Left lung (tissue), 14 donors: ENCODE measurements at regions of chr3 and their contacts with region 1.

Region 1: DNA sequence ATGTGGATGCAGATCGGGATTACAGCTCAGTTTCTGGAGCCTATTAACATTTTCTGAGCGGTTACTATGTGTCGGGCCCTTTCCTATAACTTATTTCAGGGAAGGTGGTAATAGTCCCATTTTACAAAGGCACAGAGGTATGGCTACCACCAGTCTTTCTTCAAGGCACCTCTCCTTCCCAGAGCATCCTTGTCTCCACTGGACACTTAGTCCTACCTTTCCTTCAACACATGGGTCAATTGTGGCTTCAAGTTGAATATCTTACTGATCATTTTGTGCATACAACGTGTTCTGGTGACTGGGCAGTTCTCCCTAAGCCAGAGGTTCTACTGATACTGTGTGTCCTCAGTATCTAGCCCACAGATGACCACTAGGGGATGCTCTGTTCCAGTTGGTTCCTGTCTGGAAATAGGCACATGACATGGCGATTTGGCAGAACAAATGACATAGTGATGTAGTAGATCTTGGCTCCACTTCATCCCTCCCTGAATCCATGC is 60.7 kb upstream of the CMTM8 start:
- DNase-seq: peak in 1 of 4 donors; percentile 53
- ATAC-seq: peak; percentile 97
- H3K4me3 ChIP-seq: no peak overlapping the region
- H3K27ac ChIP-seq: no peak overlapping the region
- H3K4me1 ChIP-seq: peaks cover 9 to 13% of the 10 kb centered on the region in 2 donors
- H3K27me3 ChIP-seq: no peaks in the 10 kb centered on the region
- CTCF ChIP-seq: peak; percentile 71 to 72

Region 2: DNA sequence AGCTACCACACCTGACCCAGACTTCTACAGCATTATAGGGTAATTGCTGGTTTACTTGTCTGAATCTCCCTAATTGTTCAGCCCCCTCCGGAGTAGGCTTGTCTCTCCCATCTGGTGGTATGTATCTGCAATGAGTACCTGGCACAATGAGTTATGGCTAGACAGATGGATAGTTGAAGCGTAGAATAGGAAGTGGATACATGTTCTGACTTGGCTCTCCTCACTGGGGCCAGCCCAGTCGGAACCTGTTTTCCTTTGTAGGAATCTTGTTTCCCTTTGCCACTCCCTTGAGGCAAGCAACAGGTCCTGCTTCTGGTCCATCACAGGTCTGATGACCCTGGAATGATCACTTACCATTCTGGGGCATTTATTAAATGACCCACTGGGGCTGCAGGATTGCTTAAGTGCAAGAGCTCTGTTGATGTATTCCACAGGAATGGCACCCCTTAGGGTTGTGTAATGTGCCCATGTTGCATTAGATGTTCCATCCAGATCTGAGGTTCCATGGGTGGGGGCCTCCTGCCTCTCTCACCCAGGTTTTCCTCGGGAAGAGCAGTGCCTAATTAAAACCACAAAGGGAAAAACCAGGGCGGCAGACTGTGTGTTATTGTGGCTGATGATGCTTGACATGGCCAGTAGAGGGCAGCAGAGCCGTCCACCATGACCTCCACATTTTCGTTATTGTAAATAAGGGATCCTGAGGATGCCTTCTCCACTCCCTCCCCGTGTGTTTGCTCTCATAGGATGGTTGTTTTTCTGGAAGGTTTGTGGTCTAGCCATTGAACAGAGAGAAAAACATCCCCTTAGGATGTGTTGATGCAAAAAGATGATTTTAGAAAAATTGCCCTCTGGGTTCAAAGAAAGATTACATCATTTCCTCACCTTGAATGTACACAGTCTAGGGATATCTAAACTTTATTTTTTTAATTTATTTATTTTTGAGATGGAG is 118.8 kb after region 1 on chr3:
- intact Hi-C with region 1: loop called in 1 of 2 experiments (anchors 10 kb)
- DNase-seq: peak in 3 of 4 donors; percentile 49 to 75 (median 58)
- ATAC-seq: peak; percentile 91
- H3K4me3 ChIP-seq: no peak overlapping the region
- H3K27ac ChIP-seq: no peak overlapping the region
- H3K4me1 ChIP-seq: peaks cover 0 to 23% of the 10 kb centered on the region in 2 donors
- H3K27me3 ChIP-seq: no peaks in the 10 kb centered on the region
- CTCF ChIP-seq: peak; percentile 79 to 81

Region 3: GRCh38 chr3:32334675-32335074 is 156.9 kb after region 1 on chr3:
- intact Hi-C with region 1: loop called in 1 of 2 experiments (anchors 5 kb)
- DNase-seq: no peak
- ATAC-seq: peak; percentile 39
- H3K4me3 ChIP-seq: no peak overlapping the region
- H3K27ac ChIP-seq: no peak overlapping the region
- H3K4me1 ChIP-seq: peaks cover 0 to 3% of the 10 kb centered on the region in 2 donors
- H3K27me3 ChIP-seq: no peaks in the 10 kb centered on the region
- CTCF ChIP-seq: no peak